Sciatic nerve (tissue), 2 donors: ENCODE measurements at regions of chr1 and their contacts with region 1.

Region 1: DNA sequence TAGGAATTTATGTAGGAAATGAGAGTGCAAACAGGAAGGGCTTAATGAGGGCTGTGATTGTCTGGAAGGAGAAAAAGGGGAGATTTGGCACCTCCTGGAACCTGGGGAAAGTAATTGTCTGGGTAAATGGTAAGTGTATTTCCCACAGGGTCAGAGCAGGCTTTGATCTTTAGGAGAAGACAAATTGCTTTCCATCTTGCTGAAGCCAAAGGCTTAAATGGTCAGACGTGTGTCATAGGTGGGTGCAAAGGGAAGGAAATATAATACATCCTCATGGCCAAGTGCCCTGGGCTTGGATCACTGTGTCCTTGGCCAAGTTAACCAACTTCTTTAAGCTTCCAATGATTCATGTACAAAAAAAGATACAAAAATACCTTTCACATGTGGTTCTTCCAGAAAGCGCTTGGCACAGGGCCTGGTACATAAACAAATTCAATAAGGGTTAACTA is 1.3 kb upstream of the DUSP23 start:
- DNase-seq: no peak
- ATAC-seq: no peak

Region 2: GRCh38 chr1:160018900-160019299 is 239.5 kb after region 1 on chr1:
- intact Hi-C with region 1: loop called (anchors 10 kb)
- DNase-seq: no peak
- ATAC-seq: no peak